ENCODE measurements at regions of chr9 and their contacts with region 1.

Region 1: DNA sequence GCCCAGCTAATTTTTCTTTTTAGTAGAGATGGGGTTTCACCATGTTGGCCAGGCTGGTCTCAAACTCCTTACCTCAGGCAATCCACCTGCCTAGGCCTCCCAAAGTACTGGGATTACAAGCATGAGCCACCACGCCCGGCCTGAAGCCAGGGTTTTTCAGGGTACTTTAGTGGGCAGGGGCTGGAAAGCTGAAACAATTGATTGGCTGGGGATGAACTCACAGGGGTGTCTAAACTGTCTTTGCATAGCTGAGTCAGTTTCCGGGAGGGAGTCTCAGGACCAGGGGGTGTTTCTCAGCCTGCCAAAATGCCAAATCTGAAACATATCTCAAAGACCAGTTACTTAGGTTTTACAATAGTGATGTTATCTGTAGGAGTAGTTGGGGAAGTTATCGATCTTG is 46.1 kb downstream of the PRUNE2 start:
- DNase-seq: no peak

Region 2: DNA sequence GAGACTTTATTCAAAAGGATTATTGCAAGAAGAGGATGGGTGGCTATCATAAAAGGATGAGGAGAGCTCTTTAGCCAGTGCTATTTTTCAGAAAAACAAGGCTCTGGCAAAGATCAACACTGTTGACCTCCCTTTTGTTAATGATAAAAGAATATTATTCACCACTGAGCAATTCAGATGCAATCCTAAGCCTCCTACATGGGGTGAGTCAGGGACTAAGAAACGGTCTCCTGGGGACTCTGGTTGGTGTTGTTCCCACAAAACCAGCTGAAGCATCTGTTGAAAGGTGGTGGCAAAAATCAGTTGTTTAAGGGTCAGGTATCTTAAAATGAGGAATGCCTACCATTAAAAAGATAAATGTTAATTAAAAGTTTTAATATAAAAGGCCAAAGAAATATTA is 408.6 kb before region 1 on chr9:
- intact Hi-C with region 1: no loop called
- DNase-seq: no peak

Region 3: GRCh38 chr9:78363221-78363620 is 1503.4 kb after region 1 on chr9:
- intact Hi-C with region 1: loop called in 1 of 2 experiments (anchors 5 kb)
- DNase-seq: no peak

Measured in posterior vena cava (tissue), 2 donors.